Sigmoid colon (tissue), 7 donors: ENCODE measurements at regions of chr2 and their contacts with region 1.

Region 1: GRCh38 chr2:38728694-38729093 is 22.5 kb downstream of the SRSF7 start:
- DNase-seq: no peak
- H3K4me3 ChIP-seq: no peak overlapping the region
- H3K27ac ChIP-seq: no peak overlapping the region
- H3K4me1 ChIP-seq: no peaks in the 10 kb centered on the region
- H3K27me3 ChIP-seq: no peaks in the 10 kb centered on the region
- CTCF ChIP-seq: no peak
- EP300 ChIP-seq: no peak
- POLR2A ChIP-seq: no peak

Region 2: GRCh38 chr2:37982147-37982582 is 746.5 kb before region 1 on chr2:
- intact Hi-C with region 1: no loop called
- DNase-seq: peak; percentile 78
- H3K4me3 ChIP-seq: peak overlapping the region in 3 of 4 donors; percentile 20 to 23 (median 22)
- H3K27ac ChIP-seq: no peak overlapping the region
- H3K4me1 ChIP-seq: peaks cover 0 to 5% (median 2%) of the 10 kb centered on the region in 4 donors
- H3K27me3 ChIP-seq: no peaks in the 10 kb centered on the region
- CTCF ChIP-seq: peak; percentile 59 to 88 (median 80)
- EP300 ChIP-seq: no peak
- POLR2A ChIP-seq: no peak

Region 3: DNA sequence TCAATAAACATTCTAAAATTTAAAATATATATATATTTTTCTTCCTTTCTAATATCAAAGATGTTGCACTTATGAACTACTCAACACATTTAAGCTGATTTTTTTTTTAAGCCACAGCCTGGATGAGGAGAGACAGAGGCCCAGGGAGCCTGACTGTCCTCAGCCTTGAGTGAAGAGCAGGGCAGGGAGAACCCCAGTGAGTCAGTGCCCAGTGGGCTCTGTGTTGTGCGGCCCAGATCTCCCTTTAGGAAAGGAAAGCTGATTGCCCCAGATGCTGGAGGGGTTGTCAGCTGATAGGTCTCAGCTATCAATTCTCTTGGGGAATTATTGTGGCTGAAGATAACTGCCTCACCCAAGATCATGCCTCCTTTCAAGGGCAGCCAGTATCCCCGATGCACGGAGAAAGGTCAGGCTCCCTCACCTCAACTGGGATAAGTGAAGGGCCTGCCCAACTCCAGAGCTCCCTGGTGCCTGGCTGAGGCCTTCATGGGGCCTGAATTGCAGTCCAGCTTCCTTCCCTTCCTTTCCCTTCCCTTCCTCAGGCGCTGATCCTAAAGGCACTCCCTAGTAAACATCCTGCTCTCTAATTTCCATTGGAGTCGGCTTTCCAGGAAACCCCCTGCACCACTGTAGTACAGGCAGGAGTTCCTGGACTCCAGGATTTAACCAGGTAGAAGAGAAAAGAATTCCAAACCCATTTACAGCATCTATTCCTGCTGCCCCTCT is 244.8 kb before region 1 on chr2:
- intact Hi-C with region 1: no loop called
- DNase-seq: no peak
- H3K4me3 ChIP-seq: no peak overlapping the region
- H3K27ac ChIP-seq: no peak overlapping the region
- H3K4me1 ChIP-seq: peaks cover 0 to 5% (median 0%) of the 10 kb centered on the region in 4 donors
- H3K27me3 ChIP-seq: no peaks in the 10 kb centered on the region
- CTCF ChIP-seq: no peak
- EP300 ChIP-seq: no peak
- POLR2A ChIP-seq: no peak

Region 4: GRCh38 chr2:38581193-38582147 is 147.2 kb before region 1 on chr2:
- intact Hi-C with region 1: loop called (anchors 5 kb)
- DNase-seq: no peak
- H3K4me3 ChIP-seq: no peak overlapping the region
- H3K27ac ChIP-seq: peak overlapping the region in 2 of 4 donors; percentile 17 to 27
- H3K4me1 ChIP-seq: peaks cover 0 to 39% (median 11%) of the 10 kb centered on the region in 4 donors
- H3K27me3 ChIP-seq: no peaks in the 10 kb centered on the region
- CTCF ChIP-seq: peak; percentile 31 to 63 (median 60)
- EP300 ChIP-seq: no peak
- POLR2A ChIP-seq: no peak

Region 5: DNA sequence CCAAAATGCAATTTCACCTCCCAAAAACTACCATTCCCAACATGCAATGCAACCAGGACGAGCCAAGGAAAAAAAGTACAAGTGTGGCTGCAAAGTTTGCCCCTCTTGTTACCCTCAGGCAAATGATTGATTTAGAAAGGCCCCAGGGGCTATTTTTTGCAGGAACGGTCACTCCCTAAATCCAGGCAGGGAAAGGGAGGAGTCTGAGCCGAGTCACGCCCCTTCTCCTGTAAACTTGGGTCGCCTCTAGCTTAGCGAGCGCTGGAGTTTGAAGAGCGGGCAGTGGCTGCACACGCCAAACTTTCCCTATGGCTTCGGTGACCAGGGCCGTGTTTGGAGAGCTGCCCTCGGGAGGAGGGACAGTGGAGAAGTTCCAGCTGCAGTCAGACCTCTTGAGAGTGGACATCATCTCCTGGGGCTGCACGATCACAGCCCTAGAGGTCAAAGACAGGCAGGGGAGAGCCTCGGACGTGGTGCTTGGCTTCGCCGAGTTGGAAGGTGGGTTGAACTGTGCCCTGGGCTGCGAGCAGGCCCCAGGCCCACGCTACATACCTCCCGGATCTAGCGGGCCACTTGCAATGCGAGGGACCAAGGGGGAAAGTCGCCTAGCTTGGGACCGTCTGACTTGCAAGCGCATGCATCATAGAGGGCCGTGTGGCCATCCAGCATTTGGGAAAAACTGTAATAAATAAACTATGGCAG is 62.7 kb before region 1 on chr2 and contains the start of gene GALM:
- intact Hi-C with region 1: loop called (anchors 5 kb)
- DNase-seq: peak; percentile 92
- H3K4me3 ChIP-seq: peak within 1 kb of the TSS; percentile 44 to 68 (median 52)
- H3K27ac ChIP-seq: peak within 1 kb of the TSS; percentile 65 to 82 (median 72)
- H3K4me1 ChIP-seq: peaks cover 0 to 20% (median 16%) of the 10 kb centered on the region in 4 donors
- H3K27me3 ChIP-seq: no peaks in the 10 kb centered on the region
- CTCF ChIP-seq: no peak
- EP300 ChIP-seq: peak in 1 of 4 donors; percentile 38
- POLR2A ChIP-seq: peak in 1 of 2 donors; percentile 54
- total RNA-seq, gene GALM: 9.5 to 35.2 (median 19.0) TPM

Region 6: GRCh38 chr2:38702413-38702812 is 26.3 kb before region 1 on chr2:
- intact Hi-C with region 1: no loop called
- DNase-seq: no peak
- H3K4me3 ChIP-seq: no peak overlapping the region
- H3K27ac ChIP-seq: no peak overlapping the region
- H3K4me1 ChIP-seq: peaks cover 0 to 14% (median 5%) of the 10 kb centered on the region in 4 donors
- H3K27me3 ChIP-seq: no peaks in the 10 kb centered on the region
- CTCF ChIP-seq: no peak
- EP300 ChIP-seq: no peak
- POLR2A ChIP-seq: no peak

Region 7: GRCh38 chr2:38886063-38886462 is 157.4 kb after region 1 on chr2:
- intact Hi-C with region 1: no loop called
- DNase-seq: no peak
- H3K4me3 ChIP-seq: no peak overlapping the region
- H3K27ac ChIP-seq: no peak overlapping the region
- H3K4me1 ChIP-seq: no peaks in the 10 kb centered on the region
- H3K27me3 ChIP-seq: no peaks in the 10 kb centered on the region
- CTCF ChIP-seq: no peak
- EP300 ChIP-seq: no peak
- POLR2A ChIP-seq: no peak